GM12878 (cell line): ENCODE measurements at regions of chr15 and their contacts with region 1.

Region 1: GRCh38 chr15:41675337-41675736 is 15.1 kb downstream of the MGA start:
- DNase-seq: no peak
- ATAC-seq: no peak
- H3K4me3 ChIP-seq: no peak overlapping the region
- H3K27ac ChIP-seq: no peak overlapping the region
- H3K4me1 ChIP-seq: peaks cover 4% of the 10 kb centered on the region; the same call in 1 of the 2 replicates
- H3K27me3 ChIP-seq: no peaks in the 10 kb centered on the region
- CTCF ChIP-seq: no peak
- EP300 ChIP-seq: no peak
- POLR2A ChIP-seq: no peak
- RAD21 ChIP-seq: no peak

Region 2: GRCh38 chr15:41620536-41621199 is 54.7 kb before region 1 on chr15:
- CTCF ChIA-PET with region 1: no interaction called
- POLR2A ChIA-PET with region 1: no interaction called
- RAD21 ChIA-PET with region 1: no interaction called
- SMC1A ChIA-PET with region 1: no interaction called
- in situ Hi-C with region 1: no loop called
- intact Hi-C with region 1: no loop called
- DNase-seq: no peak
- ATAC-seq: no peak; the same call in 2 of the 3 replicates
- H3K4me3 ChIP-seq: peak overlapping the region; percentile 68
- H3K27ac ChIP-seq: no peak overlapping the region
- H3K4me1 ChIP-seq: peaks cover 5% of the 10 kb centered on the region
- H3K27me3 ChIP-seq: no peaks in the 10 kb centered on the region
- CTCF ChIP-seq: no peak
- EP300 ChIP-seq: no peak
- POLR2A ChIP-seq: no peak
- RAD21 ChIP-seq: no peak

Region 3: GRCh38 chr15:41660235-41661077 is 14.9 kb before region 1 on chr15 and contains the start of gene MGA:
- CTCF ChIA-PET with region 1: interaction called, 5 read pairs
- POLR2A ChIA-PET with region 1: interaction called, 6 read pairs
- RAD21 ChIA-PET with region 1: interaction called, 4 read pairs
- SMC1A ChIA-PET with region 1: interaction called, 10 read pairs
- in situ Hi-C with region 1: no loop called
- intact Hi-C with region 1: no loop called
- DNase-seq: peak; percentile 84
- ATAC-seq: peak; percentile 87
- H3K4me3 ChIP-seq: peak within 1 kb of the TSS; percentile 85
- H3K27ac ChIP-seq: peak within 1 kb of the TSS; percentile 79
- H3K4me1 ChIP-seq: peaks cover 26% of the 10 kb centered on the region
- H3K27me3 ChIP-seq: no peaks in the 10 kb centered on the region
- CTCF ChIP-seq: peak in 2 of 3 experiments; percentile 21 to 29; a peak in 1 of 6 replicates
- EP300 ChIP-seq: 0 out of 4 replicates have a peak, but pooled peaks of 1 of the 2 experiments have one; percentile 7
- POLR2A ChIP-seq: peak; percentile 86
- RAD21 ChIP-seq: no peak
- polyA plus RNA-seq, gene MGA: 2.6 to 2.8 TPM